SK-N-SH (cell line): ENCODE measurements at regions of chr11 and their contacts with region 1.

Region 1: GRCh38 chr11:61555051-61555969 is 25.6 kb downstream of the SYT7 start:
- DNase-seq: peak; percentile 90
- H3K4me3 ChIP-seq: peak overlapping the region in 1 of 2 experiments; percentile 1; a peak in 1 of 4 replicates
- H3K27ac ChIP-seq: peak overlapping the region in 1 of 2 experiments; percentile 67; a peak in 2 of 4 replicates
- H3K4me1 ChIP-seq: peaks cover 0 to 65% of the 10 kb centered on the region in 2 experiments; a peak in 1 of 4 replicates
- H3K27me3 ChIP-seq: peaks cover 37% of the 10 kb centered on the region
- CTCF ChIP-seq: peak; percentile 34
- EP300 ChIP-seq: no peak
- RAD21 ChIP-seq: no peak

Region 2: DNA sequence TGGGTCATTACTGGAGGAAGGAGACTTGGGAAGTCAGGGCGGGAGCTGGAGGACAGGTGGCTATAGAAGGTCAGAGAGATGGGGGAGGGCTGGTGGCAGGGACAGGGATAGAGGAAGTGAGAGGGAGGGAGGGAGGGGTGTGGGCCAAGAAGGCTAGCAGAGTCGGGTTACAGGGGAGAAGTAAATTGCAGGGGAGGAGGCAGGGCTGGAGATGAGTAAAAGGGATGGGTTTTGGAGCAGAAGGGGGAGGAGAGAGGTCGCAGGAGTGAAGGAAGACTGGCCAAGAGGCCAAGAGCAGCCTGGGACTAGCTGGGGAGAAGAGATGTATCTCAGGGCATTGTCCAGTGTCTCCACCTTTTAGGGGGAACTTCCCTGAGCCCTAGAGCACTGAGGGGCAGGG is 13.7 kb before region 1 on chr11:
- CTCF ChIA-PET with region 1: interaction called, 15 read pairs
- POLR2A ChIA-PET with region 1: interaction called, 7 read pairs
- DNase-seq: peak; percentile 63
- H3K4me3 ChIP-seq: no peak overlapping the region
- H3K27ac ChIP-seq: peak overlapping the region in 1 of 2 experiments; percentile 88; a peak in 2 of 4 replicates
- H3K4me1 ChIP-seq: peaks cover 0 to 63% of the 10 kb centered on the region in 2 experiments; a peak in 2 of 4 replicates
- H3K27me3 ChIP-seq: no peaks in the 10 kb centered on the region
- CTCF ChIP-seq: no peak
- EP300 ChIP-seq: no peak
- RAD21 ChIP-seq: no peak

Region 3: DNA sequence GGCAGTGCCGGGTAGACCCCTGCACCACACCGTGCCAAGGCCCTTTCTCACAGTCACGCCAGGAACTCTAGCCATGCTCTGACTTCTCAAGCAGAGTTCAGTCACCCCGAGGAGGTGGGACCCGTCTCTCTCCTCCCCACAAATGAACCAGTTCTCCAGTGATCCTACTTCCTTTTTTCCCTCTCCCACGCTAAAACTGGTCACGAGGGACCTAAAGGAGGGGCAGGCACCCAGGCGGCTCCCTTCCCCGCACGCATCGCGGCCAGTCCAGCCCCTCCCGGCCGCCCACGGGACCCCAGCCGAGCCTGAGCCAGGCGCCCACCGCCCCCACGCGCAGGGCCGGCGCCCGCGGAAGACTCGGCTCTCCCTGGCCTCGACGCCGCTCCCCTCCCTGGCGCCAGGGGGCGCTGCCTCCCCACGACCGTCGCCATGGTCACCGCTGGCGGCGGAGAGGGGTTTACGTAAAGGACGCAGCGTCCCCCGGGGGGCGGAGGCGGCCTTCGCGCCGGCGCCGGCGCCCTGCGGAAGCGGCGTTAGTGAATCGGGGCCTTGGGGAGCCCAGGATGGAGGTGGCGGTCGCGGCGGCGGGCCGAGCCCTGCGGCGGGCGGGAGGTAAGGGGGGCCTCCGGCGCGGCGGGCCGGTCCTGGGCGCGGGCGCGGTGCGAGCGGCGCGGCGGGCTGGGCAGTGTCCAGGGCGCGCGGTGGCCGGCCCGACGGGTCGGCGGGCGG is 124.7 kb after region 1 on chr11 and contains the start of gene DAGLA:
- CTCF ChIA-PET with region 1: no interaction called
- POLR2A ChIA-PET with region 1: no interaction called
- DNase-seq: peak; percentile 99
- H3K4me3 ChIP-seq: peak within 1 kb of the TSS; percentile 59 to 63
- H3K27ac ChIP-seq: no peak within 1 kb of the TSS
- H3K4me1 ChIP-seq: peaks cover 0 to 14% of the 10 kb centered on the region in 2 experiments; a peak in 1 of 4 replicates
- H3K27me3 ChIP-seq: peaks cover 19% of the 10 kb centered on the region; the same call in 1 of the 2 replicates
- CTCF ChIP-seq: peak; percentile 71
- EP300 ChIP-seq: no peak
- RAD21 ChIP-seq: peak; percentile 64
- polyA plus RNA-seq, gene DAGLA: 2.7 and 3.3 TPM in 2 replicates

Region 4: DNA sequence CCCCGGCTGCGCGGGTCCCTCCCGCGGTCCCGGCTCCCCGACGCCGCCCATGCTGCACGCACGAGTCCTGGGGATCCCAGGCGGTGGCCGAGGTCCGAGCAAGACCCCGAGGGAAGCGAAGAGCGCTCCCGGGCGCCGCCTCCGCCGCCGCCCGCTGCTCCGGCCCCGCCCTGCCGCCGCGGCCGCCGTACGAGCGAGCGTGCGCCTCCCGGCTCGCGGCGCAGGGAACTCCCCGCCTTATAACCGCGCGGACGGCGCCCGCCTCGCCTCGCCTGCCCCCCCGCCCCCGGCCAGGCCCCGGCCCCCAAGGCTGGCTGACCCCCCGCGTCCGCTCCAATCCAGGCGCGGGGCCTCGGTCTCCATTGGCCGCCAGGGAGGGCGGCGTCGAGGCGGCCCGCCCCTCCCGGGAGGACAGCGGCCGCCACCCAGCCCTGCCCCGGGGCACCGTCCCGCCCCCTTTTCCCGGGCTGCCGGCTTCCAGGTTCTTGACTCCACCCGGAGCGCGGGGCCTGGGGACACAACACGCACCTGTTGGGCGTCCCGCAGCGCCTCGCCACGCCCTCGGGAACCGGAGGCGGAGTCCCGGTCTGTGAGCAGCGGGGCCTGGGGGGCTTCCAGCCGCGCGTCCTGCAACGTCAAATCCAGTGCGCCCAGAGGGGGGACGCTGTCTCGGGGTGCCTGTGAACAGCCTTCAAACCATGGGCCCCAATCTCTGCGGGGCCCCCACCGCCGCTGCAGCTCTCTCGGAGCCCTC is 336.2 kb after region 1 on chr11 and contains the start of gene FADS3:
- CTCF ChIA-PET with region 1: no interaction called
- POLR2A ChIA-PET with region 1: no interaction called
- DNase-seq: peak; percentile 96
- H3K4me3 ChIP-seq: peak within 1 kb of the TSS; percentile 77 to 81
- H3K27ac ChIP-seq: peak within 1 kb of the TSS; percentile 24 to 31; a peak in 2 of 4 replicates
- H3K4me1 ChIP-seq: peaks cover 7 to 14% of the 10 kb centered on the region in 2 experiments; a peak in 3 of 4 replicates
- H3K27me3 ChIP-seq: no peaks in the 10 kb centered on the region
- CTCF ChIP-seq: no peak
- EP300 ChIP-seq: no peak
- RAD21 ChIP-seq: no peak
- polyA plus RNA-seq, gene FADS3: 93.3 and 116 TPM in 2 replicates